B cell (primary cell): ENCODE measurements at regions of chr14 and their contacts with region 1.

Region 1: GRCh38 chr14:67426983-67427606 is 15.1 kb upstream of the PLEK2 start:
- DNase-seq: peak; percentile 85
- ATAC-seq: peak; percentile 90
- H3K4me3 ChIP-seq: no peak overlapping the region
- H3K4me3 Mint-ChIP-seq: no peak overlapping the region
- H3K27ac ChIP-seq: no peak overlapping the region
- H3K27ac Mint-ChIP-seq: no peak overlapping the region
- H3K4me1 ChIP-seq: peaks cover 0 to 4% of the 10 kb centered on the region in 2 donors
- H3K4me1 Mint-ChIP-seq: peaks cover 3% of the 10 kb centered on the region
- H3K27me3 ChIP-seq: peaks cover 0 to 25% (median 1%) of the 10 kb centered on the region in 4 experiments
- H3K27me3 Mint-ChIP-seq: peaks cover 20% of the 10 kb centered on the region
- CTCF ChIP-seq: peak; percentile 88

Region 2: DNA sequence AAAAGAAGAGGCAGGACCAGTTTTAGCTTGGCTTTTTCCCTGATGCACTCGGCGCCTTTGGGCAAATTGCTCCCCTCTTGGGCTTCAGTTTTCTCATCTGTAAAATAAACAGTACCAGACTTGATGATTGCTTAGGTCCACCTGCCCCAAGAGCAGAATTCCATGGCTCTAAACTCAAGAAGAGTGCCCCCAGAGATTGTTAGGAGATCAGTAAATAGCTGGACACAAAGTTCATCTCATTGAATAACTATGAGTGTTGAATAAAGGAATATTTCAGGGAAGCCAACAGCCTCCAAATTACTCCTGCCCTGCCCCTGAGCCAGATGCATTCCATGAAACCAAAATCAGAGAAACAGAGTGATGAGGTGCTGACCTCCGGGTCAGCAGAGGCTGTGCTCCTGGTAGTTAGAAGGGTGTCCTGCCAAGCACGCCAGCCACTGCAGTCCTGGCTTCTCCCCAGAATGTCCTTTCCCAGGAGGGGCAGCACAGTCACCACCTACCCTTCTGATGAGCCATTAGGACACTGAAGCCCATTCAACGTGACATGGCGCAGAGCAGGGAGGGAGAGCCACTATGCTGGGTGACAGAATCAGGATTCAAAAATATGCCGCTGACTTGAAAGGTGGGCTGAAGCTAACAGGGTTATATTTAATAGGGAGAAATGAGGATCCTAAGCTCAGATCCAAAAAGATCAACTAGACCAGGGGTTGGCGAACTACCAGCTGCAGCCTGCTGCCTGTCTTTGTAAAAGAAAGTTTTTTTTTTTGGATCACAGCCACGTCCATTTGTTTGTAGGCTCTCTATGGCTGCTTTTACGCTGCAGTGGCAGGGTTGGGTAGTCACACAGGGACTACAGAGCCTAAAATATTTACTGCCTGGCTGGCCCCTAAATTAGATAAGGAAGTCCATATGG is 19.3 kb after region 1 on chr14:
- CTCF ChIA-PET with region 1: interaction called, 10 read pairs
- POLR2A ChIA-PET with region 1: no interaction called
- intact Hi-C with region 1: no loop called
- DNase-seq: no peak
- ATAC-seq: no peak
- H3K4me3 ChIP-seq: no peak overlapping the region
- H3K4me3 Mint-ChIP-seq: no peak overlapping the region
- H3K27ac ChIP-seq: no peak overlapping the region
- H3K27ac Mint-ChIP-seq: no peak overlapping the region
- H3K4me1 ChIP-seq: no peaks in the 10 kb centered on the region
- H3K4me1 Mint-ChIP-seq: no peaks in the 10 kb centered on the region
- H3K27me3 ChIP-seq: no peaks in the 10 kb centered on the region
- H3K27me3 Mint-ChIP-seq: peaks cover 10% of the 10 kb centered on the region
- CTCF ChIP-seq: no peak

Region 3: GRCh38 chr14:67514650-67515385 is 87.7 kb after region 1 on chr14:
- CTCF ChIA-PET with region 1: interaction called, 17 read pairs
- POLR2A ChIA-PET with region 1: no interaction called
- intact Hi-C with region 1: no loop called
- DNase-seq: peak; percentile 66
- ATAC-seq: peak; percentile 50
- H3K4me3 ChIP-seq: peak overlapping the region; percentile 15 to 89 (median 80)
- H3K4me3 Mint-ChIP-seq: peak overlapping the region; percentile 93
- H3K27ac ChIP-seq: peak overlapping the region; percentile 65 to 73
- H3K27ac Mint-ChIP-seq: peak overlapping the region; percentile 93
- H3K4me1 ChIP-seq: peaks cover 37 to 38% of the 10 kb centered on the region in 2 donors
- H3K4me1 Mint-ChIP-seq: peaks cover 40% of the 10 kb centered on the region
- H3K27me3 ChIP-seq: no peaks in the 10 kb centered on the region
- H3K27me3 Mint-ChIP-seq: no peaks in the 10 kb centered on the region
- CTCF ChIP-seq: no peak

Region 4: DNA sequence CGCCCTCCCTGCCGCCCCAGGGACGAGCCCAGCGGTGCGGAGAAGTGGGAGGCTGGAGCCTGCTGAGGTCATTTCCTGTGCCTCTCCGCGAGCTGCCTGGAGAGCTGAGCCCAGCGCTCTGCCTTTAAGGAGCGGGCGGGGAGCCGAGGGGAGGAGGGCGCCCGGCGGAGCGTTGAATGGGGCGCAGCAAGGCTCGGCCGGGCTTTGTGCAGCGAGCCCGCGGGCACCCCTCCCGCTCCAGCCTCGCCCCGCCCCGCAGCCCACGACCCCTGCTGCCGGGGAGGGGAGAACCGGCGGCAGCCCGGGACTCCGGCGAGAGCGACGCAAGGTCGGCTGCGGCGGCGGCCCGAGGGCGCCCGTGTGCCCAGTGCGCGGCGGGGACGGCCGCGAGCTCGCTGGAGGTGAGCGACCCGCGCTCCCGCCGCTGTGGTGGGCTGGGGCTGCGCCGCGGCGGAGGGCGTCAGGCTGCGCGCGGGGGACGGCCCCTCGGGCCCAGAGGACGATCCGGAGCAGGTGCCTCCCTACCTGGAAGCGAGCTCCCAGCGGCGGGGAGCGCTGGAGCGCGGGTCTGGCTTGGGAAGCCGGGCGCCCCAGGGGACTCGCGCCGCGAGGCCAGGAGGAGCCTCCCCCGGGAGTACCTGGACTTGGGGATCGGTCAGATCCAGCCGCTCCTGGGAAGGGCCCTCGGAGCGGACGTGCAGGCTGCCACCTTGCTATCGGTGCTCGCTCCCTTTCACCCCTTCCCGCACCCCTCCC is 106.1 kb after region 1 on chr14 and contains the start of gene PLEKHH1:
- CTCF ChIA-PET with region 1: interaction called, 11 read pairs
- POLR2A ChIA-PET with region 1: no interaction called
- intact Hi-C with region 1: no loop called
- DNase-seq: peak; percentile 51
- ATAC-seq: peak; percentile 71
- H3K4me3 ChIP-seq: peak within 1 kb of the TSS in 4 of 5 experiments; percentile 22 to 66 (median 54)
- H3K4me3 Mint-ChIP-seq: peak within 1 kb of the TSS; percentile 76
- H3K27ac ChIP-seq: no peak within 1 kb of the TSS
- H3K27ac Mint-ChIP-seq: no peak within 1 kb of the TSS
- H3K4me1 ChIP-seq: peaks cover 18 to 20% of the 10 kb centered on the region in 2 donors
- H3K4me1 Mint-ChIP-seq: peaks cover 5% of the 10 kb centered on the region
- H3K27me3 ChIP-seq: peaks cover 0 to 47% (median 18%) of the 10 kb centered on the region in 4 experiments
- H3K27me3 Mint-ChIP-seq: peaks cover 46% of the 10 kb centered on the region
- CTCF ChIP-seq: no peak
- total RNA-seq, gene PLEKHH1: 0.15 and 0.17 TPM in 2 replicates

Region 5: DNA sequence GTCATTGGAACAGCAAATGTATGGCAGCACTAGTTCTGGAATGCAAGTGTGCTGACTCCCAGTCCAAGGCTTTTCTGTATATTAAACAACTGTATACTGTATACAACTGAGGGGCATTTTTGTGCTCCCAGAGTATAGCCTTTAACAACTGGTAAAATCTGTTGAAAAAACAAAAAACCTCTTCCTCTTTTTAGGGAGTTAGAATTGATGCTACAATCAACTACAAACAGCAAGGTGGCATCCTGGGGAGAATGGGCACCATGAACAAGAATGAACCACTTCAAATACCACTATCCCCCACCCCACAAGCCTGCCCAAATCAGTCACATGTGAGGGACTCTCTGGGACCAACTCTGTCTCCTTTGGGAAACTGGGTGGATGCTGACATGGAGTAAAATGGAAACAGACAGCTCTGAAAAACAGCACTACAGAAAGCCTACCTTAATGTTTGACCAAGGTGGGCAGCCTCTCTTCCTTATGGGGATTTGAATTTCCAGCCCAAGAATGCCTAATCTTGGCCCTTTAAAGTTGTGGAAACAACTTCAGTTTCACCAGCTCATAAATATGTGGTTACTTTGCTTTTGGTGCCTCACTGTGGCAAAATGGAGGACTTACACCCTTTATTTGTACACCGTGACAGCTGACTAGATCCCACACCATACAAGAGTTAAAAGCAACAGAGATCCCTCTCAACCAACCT is 239.8 kb after region 1 on chr14:
- CTCF ChIA-PET with region 1: interaction called, 29 read pairs
- POLR2A ChIA-PET with region 1: no interaction called
- intact Hi-C with region 1: loop called (anchors 1 kb)
- DNase-seq: peak; percentile 74
- ATAC-seq: peak; percentile 75
- H3K4me3 ChIP-seq: no peak overlapping the region
- H3K4me3 Mint-ChIP-seq: peak overlapping the region; percentile 60
- H3K27ac ChIP-seq: peak overlapping the region; percentile 45 to 74
- H3K27ac Mint-ChIP-seq: peak overlapping the region; percentile 78
- H3K4me1 ChIP-seq: peaks cover 22 to 23% of the 10 kb centered on the region in 2 donors
- H3K4me1 Mint-ChIP-seq: peaks cover 51% of the 10 kb centered on the region
- H3K27me3 ChIP-seq: no peaks in the 10 kb centered on the region
- H3K27me3 Mint-ChIP-seq: no peaks in the 10 kb centered on the region
- CTCF ChIP-seq: peak; percentile 80